ENCODE measurements at regions of chr15 and their contacts with region 1.

Region 1: GRCh38 chr15:77617476-77618230 is 15.1 kb downstream of the LINGO1 start:
- DNase-seq: no peak
- H3K4me3 ChIP-seq: no peak overlapping the region
- H3K27ac ChIP-seq: no peak overlapping the region
- H3K4me1 ChIP-seq: peaks cover 0 to 30% (median 18%) of the 10 kb centered on the region in 4 experiments; a peak in 6 of 7 replicates
- H3K27me3 ChIP-seq: no peaks in the 10 kb centered on the region
- CTCF ChIP-seq: peak in 2 of 3 experiments; percentile 71 to 84; a peak in 3 of 4 replicates
- EP300 ChIP-seq: no peak
- POLR2A ChIP-seq: no peak
- RAD21 ChIP-seq: peak; percentile 47 to 58; a peak in 3 of 4 replicates

Region 2: GRCh38 chr15:77486542-77487468 is 130.8 kb before region 1 on chr15:
- CTCF ChIA-PET with region 1: no interaction called
- POLR2A ChIA-PET with region 1: no interaction called
- DNase-seq: no peak
- H3K4me3 ChIP-seq: no peak overlapping the region
- H3K27ac ChIP-seq: no peak overlapping the region
- H3K4me1 ChIP-seq: peaks cover 3 to 20% (median 18%) of the 10 kb centered on the region in 4 experiments
- H3K27me3 ChIP-seq: no peaks in the 10 kb centered on the region
- CTCF ChIP-seq: no peak
- EP300 ChIP-seq: no peak
- POLR2A ChIP-seq: no peak
- RAD21 ChIP-seq: no peak

Region 3: GRCh38 chr15:77568973-77569728 is 48.5 kb before region 1 on chr15:
- CTCF ChIA-PET with region 1: interaction called, 10 read pairs
- POLR2A ChIA-PET with region 1: interaction called, 5 read pairs
- DNase-seq: no peak
- H3K4me3 ChIP-seq: no peak overlapping the region
- H3K27ac ChIP-seq: no peak overlapping the region
- H3K4me1 ChIP-seq: peaks cover 0 to 17% (median 11%) of the 10 kb centered on the region in 4 experiments; a peak in 6 of 7 replicates
- H3K27me3 ChIP-seq: no peaks in the 10 kb centered on the region
- CTCF ChIP-seq: no peak
- EP300 ChIP-seq: no peak
- POLR2A ChIP-seq: no peak
- RAD21 ChIP-seq: no peak

Region 4: DNA sequence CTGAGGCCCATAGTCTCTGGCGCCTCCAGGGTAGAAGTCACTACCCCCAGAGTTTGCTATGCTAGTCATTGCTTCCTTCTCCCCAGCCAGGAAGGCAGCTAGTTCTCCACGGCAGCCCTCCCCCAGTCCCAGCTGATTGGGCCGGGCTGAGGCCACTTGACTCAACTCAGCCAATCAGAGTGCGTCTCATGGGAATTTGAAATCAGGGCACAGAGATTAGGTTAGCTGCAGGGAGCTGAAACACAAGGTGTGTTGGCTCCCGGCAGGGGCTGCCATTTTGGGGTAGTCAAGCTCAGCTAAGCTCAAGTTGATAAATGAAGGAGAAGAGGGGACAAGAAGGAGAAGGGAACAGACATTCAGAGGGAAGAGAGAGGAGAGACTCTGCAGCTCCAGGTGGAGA is 17.8 kb before region 1 on chr15:
- CTCF ChIA-PET with region 1: interaction called, 161 read pairs
- POLR2A ChIA-PET with region 1: interaction called, 40 read pairs
- DNase-seq: no peak
- H3K4me3 ChIP-seq: no peak overlapping the region
- H3K27ac ChIP-seq: no peak overlapping the region
- H3K4me1 ChIP-seq: peaks cover 3 to 9% (median 4%) of the 10 kb centered on the region in 4 experiments; a peak in 5 of 7 replicates
- H3K27me3 ChIP-seq: no peaks in the 10 kb centered on the region
- CTCF ChIP-seq: no peak
- EP300 ChIP-seq: no peak
- POLR2A ChIP-seq: no peak
- RAD21 ChIP-seq: no peak

Region 5: DNA sequence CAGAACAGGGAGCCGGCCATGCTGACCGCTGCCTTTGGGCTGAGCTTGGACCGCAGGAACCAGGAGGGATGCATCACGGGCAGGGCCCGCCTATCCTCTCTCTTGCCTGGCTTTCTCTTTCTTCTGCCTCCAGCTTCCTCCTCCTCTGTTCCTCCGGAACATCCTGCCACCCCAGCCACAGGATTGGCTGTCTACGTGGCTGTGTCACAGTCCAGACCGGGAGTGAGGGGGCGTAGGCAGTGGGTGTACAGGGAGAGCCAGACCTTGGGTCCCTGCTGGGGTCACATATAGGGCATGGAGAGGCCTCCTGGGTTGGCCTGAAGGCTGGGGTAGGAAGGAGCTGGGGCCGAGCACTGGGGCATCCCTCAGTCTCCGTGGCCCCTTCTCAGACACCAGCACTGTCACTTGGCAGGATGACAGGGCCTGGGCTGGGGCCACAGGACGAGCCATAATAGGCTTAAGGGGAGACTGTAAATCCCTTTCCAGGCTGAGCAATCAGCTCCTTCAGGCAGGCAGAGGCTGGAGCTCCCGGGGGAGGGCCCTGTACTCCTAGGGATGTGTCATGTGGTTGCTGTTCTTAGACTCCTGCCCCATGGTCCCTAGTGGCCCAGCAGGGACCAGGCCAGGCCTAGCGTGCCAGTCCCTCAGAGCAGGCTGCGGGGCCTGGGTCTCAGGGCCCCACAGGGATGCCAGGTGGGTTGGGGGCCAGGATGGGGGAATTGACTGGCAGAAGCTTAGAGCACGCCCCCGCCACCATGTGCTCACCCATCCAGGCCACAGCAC is 10.4 kb before region 1 on chr15:
- CTCF ChIA-PET with region 1: interaction called, 161 read pairs
- POLR2A ChIA-PET with region 1: interaction called, 40 read pairs
- DNase-seq: no peak
- H3K4me3 ChIP-seq: no peak overlapping the region
- H3K27ac ChIP-seq: no peak overlapping the region
- H3K4me1 ChIP-seq: peaks cover 4 to 41% (median 22%) of the 10 kb centered on the region in 4 experiments
- H3K27me3 ChIP-seq: no peaks in the 10 kb centered on the region
- CTCF ChIP-seq: no peak
- EP300 ChIP-seq: no peak
- POLR2A ChIP-seq: no peak
- RAD21 ChIP-seq: no peak

Region 6: GRCh38 chr15:77633134-77633912 is 15.7 kb after region 1 on chr15:
- CTCF ChIA-PET with region 1: interaction called, 244 read pairs
- POLR2A ChIA-PET with region 1: interaction called, 142 read pairs
- DNase-seq: peak; percentile 87 to 99
- H3K4me3 ChIP-seq: peak overlapping the region; percentile 58 to 68 (median 67)
- H3K27ac ChIP-seq: peak overlapping the region; percentile 84
- H3K4me1 ChIP-seq: peaks cover 22 to 48% (median 33%) of the 10 kb centered on the region in 4 experiments
- H3K27me3 ChIP-seq: no peaks in the 10 kb centered on the region; a peak in 1 of 7 replicates
- CTCF ChIP-seq: peak in 2 of 3 experiments; percentile 100; a peak in 3 of 4 replicates
- EP300 ChIP-seq: no peak
- POLR2A ChIP-seq: peak in 1 of 2 experiments; percentile 68; a peak in 2 of 3 replicates
- RAD21 ChIP-seq: peak; percentile 83 to 89

Region 7: GRCh38 chr15:77671363-77671986 is 53.8 kb after region 1 on chr15:
- CTCF ChIA-PET with region 1: no interaction called
- POLR2A ChIA-PET with region 1: no interaction called
- DNase-seq: no peak
- H3K4me3 ChIP-seq: no peak overlapping the region
- H3K27ac ChIP-seq: no peak overlapping the region
- H3K4me1 ChIP-seq: no peaks in the 10 kb centered on the region; a peak in 2 of 7 replicates
- H3K27me3 ChIP-seq: no peaks in the 10 kb centered on the region
- CTCF ChIP-seq: no peak
- EP300 ChIP-seq: no peak
- POLR2A ChIP-seq: no peak
- RAD21 ChIP-seq: no peak

Region 8: GRCh38 chr15:78329625-78330024 is 712.0 kb after region 1 on chr15:
- CTCF ChIA-PET with region 1: no interaction called
- POLR2A ChIA-PET with region 1: no interaction called
- DNase-seq: no peak
- H3K4me3 ChIP-seq: no peak overlapping the region
- H3K27ac ChIP-seq: no peak overlapping the region
- H3K4me1 ChIP-seq: peaks cover 5 to 11% (median 8%) of the 10 kb centered on the region in 4 experiments
- H3K27me3 ChIP-seq: no peaks in the 10 kb centered on the region
- CTCF ChIP-seq: no peak
- EP300 ChIP-seq: no peak
- POLR2A ChIP-seq: no peak
- RAD21 ChIP-seq: no peak